HAP-1 (cell line): ENCODE measurements at regions of chr10 and their contacts with region 1.

Region 1: DNA sequence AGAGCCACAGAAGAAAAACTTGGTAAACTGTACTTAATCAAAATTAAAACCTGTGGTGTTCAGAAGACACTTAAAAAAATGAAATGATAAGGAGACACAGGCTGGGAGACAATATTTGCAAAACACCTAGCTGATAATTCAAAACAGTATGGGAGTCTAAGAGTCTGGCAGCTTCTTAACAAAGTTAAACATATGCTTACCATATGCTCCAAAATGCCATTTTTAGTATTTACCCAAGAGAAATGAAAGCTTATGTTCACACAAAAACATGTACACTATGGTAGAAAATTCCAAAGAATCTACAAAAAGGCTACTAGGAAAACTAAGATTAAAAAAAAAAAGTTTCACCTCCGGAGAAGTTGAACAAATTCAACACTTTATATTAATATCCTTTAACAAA is 48.6 kb downstream of the ITGB1 start:
- DNase-seq: no peak
- H3K4me3 ChIP-seq: no peak overlapping the region
- H3K4me1 ChIP-seq: peaks cover 7% of the 10 kb centered on the region; the same call in 1 of the 2 replicates
- H3K27me3 ChIP-seq: no peaks in the 10 kb centered on the region

Region 2: GRCh38 chr10:33008499-33009243 is 99.2 kb after region 1 on chr10:
- in situ Hi-C with region 1: loop called (anchors 10 kb)
- DNase-seq: peak; percentile 75 to 85
- H3K4me3 ChIP-seq: no peak overlapping the region
- H3K4me1 ChIP-seq: peaks cover 18% of the 10 kb centered on the region
- H3K27me3 ChIP-seq: peaks cover 3% of the 10 kb centered on the region; the same call in 1 of the 2 replicates